AG04449 (cell line): ENCODE measurements at regions of chr12 and their contacts with region 1.

Region 1: GRCh38 chr12:57983146-57983857 is 41.9 kb downstream of the ATP23 start:
- DNase-seq: peak; percentile 16
- H3K4me3 ChIP-seq: no peak overlapping the region
- CTCF ChIP-seq: peak; percentile 60

Region 2: DNA sequence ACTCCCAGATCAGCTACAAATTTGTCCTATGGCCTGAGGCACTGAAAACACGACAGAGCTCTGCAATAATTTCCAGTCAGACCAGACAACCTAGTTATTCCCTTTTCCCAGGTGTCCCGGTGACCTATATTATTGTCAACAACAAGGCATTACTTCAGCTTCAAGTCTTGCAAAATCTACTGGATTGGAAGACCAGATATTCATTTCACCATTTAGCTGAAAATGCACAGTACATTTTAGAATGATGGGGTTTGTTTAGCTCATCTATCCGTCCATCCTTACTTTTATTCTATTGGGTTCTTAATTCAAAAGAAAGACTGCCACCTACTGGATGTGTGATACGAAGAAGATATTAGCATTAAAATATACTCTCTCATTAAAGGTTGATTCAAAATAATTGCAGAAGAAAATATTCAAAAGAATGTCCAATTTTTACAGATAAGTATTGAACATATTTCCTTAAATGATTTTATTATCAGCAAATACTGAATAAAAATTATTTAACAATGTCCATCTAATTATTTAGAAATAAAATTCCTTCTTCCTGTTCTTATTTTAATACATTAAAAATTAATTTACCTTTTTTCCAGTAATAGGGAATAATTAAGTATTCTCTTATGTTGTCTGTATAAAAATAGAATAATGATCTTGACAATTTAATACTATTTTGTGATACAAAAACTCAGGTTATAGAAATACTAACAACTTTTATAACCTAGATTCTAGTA is 1181.9 kb after region 1 on chr12:
- CTCF ChIA-PET with region 1: interaction called, 10 read pairs
- POLR2A ChIA-PET with region 1: no interaction called
- DNase-seq: no peak
- H3K4me3 ChIP-seq: no peak overlapping the region
- CTCF ChIP-seq: peak; percentile 15